ENCODE measurements at regions of chr4 and their contacts with region 1.

Region 1: GRCh38 chr4:128831531-128832242 is 22.2 kb downstream of the JADE1 start:
- DNase-seq: no peak
- H3K4me3 ChIP-seq: peak overlapping the region in 1 of 4 experiments; percentile 35; a peak in 2 of 8 replicates
- H3K27ac ChIP-seq: 0 out of 2 replicates have a peak overlapping the region, but pooled peaks have one; percentile 20
- H3K4me1 ChIP-seq: peaks cover 15 to 50% (median 38%) of the 10 kb centered on the region in 4 experiments
- H3K27me3 ChIP-seq: no peaks in the 10 kb centered on the region
- CTCF ChIP-seq: no peak
- EP300 ChIP-seq: no peak
- POLR2A ChIP-seq: no peak
- RAD21 ChIP-seq: no peak

Region 2: GRCh38 chr4:128844931-128845330 is 13.2 kb after region 1 on chr4:
- CTCF ChIA-PET with region 1: interaction called, 5 read pairs
- POLR2A ChIA-PET with region 1: interaction called, 39 read pairs
- DNase-seq: no peak
- H3K4me3 ChIP-seq: no peak overlapping the region
- H3K27ac ChIP-seq: no peak overlapping the region
- H3K4me1 ChIP-seq: peaks cover 0 to 7% (median 0%) of the 10 kb centered on the region in 4 experiments; a peak in 4 of 7 replicates
- H3K27me3 ChIP-seq: no peaks in the 10 kb centered on the region
- CTCF ChIP-seq: no peak
- EP300 ChIP-seq: no peak
- POLR2A ChIP-seq: peak in 1 of 2 experiments; percentile 51; a peak in 1 of 3 replicates
- RAD21 ChIP-seq: no peak

Region 3: DNA sequence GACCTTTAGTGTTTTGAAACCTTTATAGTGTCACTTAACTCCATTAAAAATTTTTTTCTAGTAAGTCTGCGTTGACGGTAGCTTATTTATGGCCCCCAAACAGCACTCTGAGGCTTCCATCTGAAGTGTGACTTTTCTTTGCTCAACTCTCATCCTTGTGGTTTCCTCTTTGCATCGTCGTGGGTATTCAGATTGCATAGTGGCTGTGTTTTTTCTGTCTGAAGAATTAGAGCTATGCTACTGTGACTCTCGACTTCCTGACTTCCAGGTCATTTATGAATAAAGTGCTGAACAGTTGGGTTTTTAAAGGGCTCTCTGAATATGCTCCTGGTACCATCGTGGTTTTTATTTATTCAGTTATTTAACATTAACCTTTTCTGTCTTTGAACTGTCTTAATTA is 22.7 kb after region 1 on chr4:
- CTCF ChIA-PET with region 1: interaction called, 12 read pairs
- POLR2A ChIA-PET with region 1: interaction called, 204 read pairs
- DNase-seq: no peak
- H3K4me3 ChIP-seq: no peak overlapping the region
- H3K27ac ChIP-seq: no peak overlapping the region
- H3K4me1 ChIP-seq: no peaks in the 10 kb centered on the region
- H3K27me3 ChIP-seq: no peaks in the 10 kb centered on the region
- CTCF ChIP-seq: no peak
- EP300 ChIP-seq: no peak
- POLR2A ChIP-seq: no peak
- RAD21 ChIP-seq: no peak

Region 4: GRCh38 chr4:128863312-128864075 is 31.8 kb after region 1 on chr4:
- CTCF ChIA-PET with region 1: interaction called, 5 read pairs
- POLR2A ChIA-PET with region 1: interaction called, 204 read pairs
- DNase-seq: peak; percentile 57 to 91
- H3K4me3 ChIP-seq: no peak overlapping the region
- H3K27ac ChIP-seq: no peak overlapping the region
- H3K4me1 ChIP-seq: peaks cover 0 to 9% (median 5%) of the 10 kb centered on the region in 4 experiments; a peak in 6 of 7 replicates
- H3K27me3 ChIP-seq: no peaks in the 10 kb centered on the region
- CTCF ChIP-seq: peak; percentile 34 to 86 (median 65)
- EP300 ChIP-seq: no peak
- POLR2A ChIP-seq: peak in 1 of 2 experiments; percentile 66; a peak in 1 of 3 replicates
- RAD21 ChIP-seq: peak; percentile 65 to 70

Region 5: GRCh38 chr4:129014566-129015509 is 183.2 kb after region 1 on chr4:
- CTCF ChIA-PET with region 1: no interaction called
- POLR2A ChIA-PET with region 1: no interaction called
- DNase-seq: no peak
- H3K4me3 ChIP-seq: no peak overlapping the region
- H3K27ac ChIP-seq: no peak overlapping the region
- H3K4me1 ChIP-seq: no peaks in the 10 kb centered on the region
- H3K27me3 ChIP-seq: no peaks in the 10 kb centered on the region
- CTCF ChIP-seq: no peak
- EP300 ChIP-seq: no peak
- POLR2A ChIP-seq: no peak
- RAD21 ChIP-seq: no peak